ENCODE measurements at regions of chr5 and their contacts with region 1.

Region 1: DNA sequence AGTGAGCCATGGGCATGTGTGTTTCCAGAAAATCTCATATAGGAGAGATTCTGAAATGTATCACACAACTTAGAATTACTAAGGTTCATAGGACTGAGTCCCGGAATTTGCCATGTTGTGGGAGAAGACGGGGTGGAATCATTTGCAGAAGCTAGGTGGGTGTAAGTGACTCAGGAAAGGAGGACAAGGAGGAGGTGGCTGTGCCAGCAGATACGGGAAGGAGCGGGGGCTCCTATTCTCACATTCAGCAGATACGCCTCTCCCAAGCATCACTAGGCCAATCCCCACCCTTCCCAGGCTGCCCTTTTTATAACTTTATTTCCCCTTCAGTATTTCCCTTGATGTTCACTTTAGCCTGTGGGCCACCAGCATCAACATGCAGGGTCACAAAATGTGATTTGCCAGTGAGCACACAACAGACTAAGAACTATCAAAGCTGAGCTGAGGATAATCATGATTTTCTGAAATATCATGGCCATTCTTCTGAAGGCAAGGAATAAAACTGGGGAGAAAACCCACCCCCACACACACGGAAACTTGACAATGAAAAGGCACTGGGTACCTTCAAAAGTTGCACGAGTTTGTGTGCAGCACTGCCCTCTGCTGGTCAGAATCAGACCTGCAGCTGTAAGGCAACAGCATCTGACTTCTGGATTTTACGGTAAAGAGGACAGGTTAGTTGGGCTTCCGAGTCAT is 133.2 kb downstream of the MTX3 start:
- DNase-seq: peak; percentile 49
- ATAC-seq: peak; percentile 76
- H3K4me3 ChIP-seq: no peak overlapping the region
- H3K27ac ChIP-seq: no peak overlapping the region
- H3K4me1 ChIP-seq: peaks cover 4 to 11% of the 10 kb centered on the region in 2 experiments; a peak in 3 of 4 replicates
- H3K27me3 ChIP-seq: no peaks in the 10 kb centered on the region
- CTCF ChIP-seq: peak; percentile 75 to 98 (median 95); a peak in 5 of 6 replicates
- POLR2A ChIP-seq: no peak
- RAD21 ChIP-seq: peak; percentile 89

Region 2: GRCh38 chr5:79702606-79703382 is 155.1 kb before region 1 on chr5:
- CTCF ChIA-PET with region 1: interaction called, 3 read pairs
- POLR2A ChIA-PET with region 1: no interaction called
- RAD21 ChIA-PET with region 1: no interaction called
- intact Hi-C with region 1: loop called (anchors 1 kb)
- DNase-seq: no peak
- ATAC-seq: no peak; the same call in 1 of the 2 replicates
- H3K4me3 ChIP-seq: no peak overlapping the region
- H3K27ac ChIP-seq: no peak overlapping the region
- H3K4me1 ChIP-seq: peaks cover 0 to 11% of the 10 kb centered on the region in 2 experiments; a peak in 2 of 4 replicates
- H3K27me3 ChIP-seq: no peaks in the 10 kb centered on the region
- CTCF ChIP-seq: peak; percentile 33 to 78 (median 71); a peak in 5 of 6 replicates
- POLR2A ChIP-seq: no peak
- RAD21 ChIP-seq: peak; percentile 42